ENCODE measurements at regions of chr1 and their contacts with region 1.

Region 1: DNA sequence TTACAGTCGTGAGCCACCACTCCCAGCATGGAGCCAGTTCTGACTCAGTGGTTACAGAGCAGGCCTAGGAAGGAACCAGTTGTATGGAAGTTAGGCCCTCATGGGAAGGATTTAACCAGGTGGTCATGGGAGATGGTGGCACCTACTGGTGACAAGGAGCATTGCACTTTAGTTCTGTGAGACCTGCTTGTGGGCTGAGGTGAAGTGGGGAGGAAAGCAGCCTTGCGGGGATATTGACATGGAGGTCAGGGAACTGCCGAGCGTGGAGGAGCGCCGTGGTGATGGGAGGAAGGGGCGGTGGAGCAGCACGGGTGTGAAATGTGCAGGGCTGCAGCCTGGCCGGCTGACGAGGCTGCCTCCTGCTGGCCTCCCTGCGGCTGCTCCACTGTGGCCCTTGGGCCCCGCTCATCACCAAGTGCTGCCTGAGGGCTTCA is 100.4 kb downstream of the GALNT2 start:
- DNase-seq: peak in 8 of 9 experiments; percentile 21 to 73 (median 39)
- ATAC-seq: peak; percentile 82
- H3K4me3 ChIP-seq: no peak overlapping the region
- H3K4me3 Mint-ChIP-seq: no peak overlapping the region
- H3K27ac ChIP-seq: no peak overlapping the region
- H3K27ac Mint-ChIP-seq: no peak overlapping the region
- H3K4me1 ChIP-seq: no peaks in the 10 kb centered on the region
- H3K4me1 Mint-ChIP-seq: peaks cover 29% of the 10 kb centered on the region
- H3K27me3 ChIP-seq: no peaks in the 10 kb centered on the region
- H3K27me3 Mint-ChIP-seq: no peaks in the 10 kb centered on the region
- CTCF ChIP-seq: peak; percentile 84

Region 2: GRCh38 chr1:229714964-229715603 is 452.4 kb before region 1 on chr1:
- CTCF ChIA-PET with region 1: interaction called, 5 read pairs
- POLR2A ChIA-PET with region 1: no interaction called
- intact Hi-C with region 1: loop called (anchors 1 to 2 kb)
- DNase-seq: peak in 5 of 9 experiments; percentile 21 to 55 (median 47)
- ATAC-seq: no peak
- H3K4me3 ChIP-seq: no peak overlapping the region
- H3K4me3 Mint-ChIP-seq: no peak overlapping the region
- H3K27ac ChIP-seq: no peak overlapping the region
- H3K27ac Mint-ChIP-seq: no peak overlapping the region
- H3K4me1 ChIP-seq: no peaks in the 10 kb centered on the region
- H3K4me1 Mint-ChIP-seq: no peaks in the 10 kb centered on the region
- H3K27me3 ChIP-seq: no peaks in the 10 kb centered on the region
- H3K27me3 Mint-ChIP-seq: no peaks in the 10 kb centered on the region
- CTCF ChIP-seq: peak; percentile 25

Region 3: GRCh38 chr1:229979993-229980392 is 187.4 kb before region 1 on chr1:
- CTCF ChIA-PET with region 1: no interaction called
- POLR2A ChIA-PET with region 1: no interaction called
- intact Hi-C with region 1: loop called in 1 of 2 experiments (anchors 10 kb)
- DNase-seq: no peak
- ATAC-seq: no peak
- H3K4me3 ChIP-seq: no peak overlapping the region
- H3K4me3 Mint-ChIP-seq: no peak overlapping the region
- H3K27ac ChIP-seq: no peak overlapping the region
- H3K27ac Mint-ChIP-seq: no peak overlapping the region
- H3K4me1 ChIP-seq: no peaks in the 10 kb centered on the region
- H3K4me1 Mint-ChIP-seq: no peaks in the 10 kb centered on the region
- H3K27me3 ChIP-seq: no peaks in the 10 kb centered on the region
- H3K27me3 Mint-ChIP-seq: peaks cover 11% of the 10 kb centered on the region
- CTCF ChIP-seq: no peak

Region 4: GRCh38 chr1:230292689-230293389 is 125.4 kb after region 1 on chr1:
- CTCF ChIA-PET with region 1: no interaction called
- POLR2A ChIA-PET with region 1: no interaction called
- intact Hi-C with region 1: no loop called
- DNase-seq: no peak
- ATAC-seq: no peak
- H3K4me3 ChIP-seq: no peak overlapping the region
- H3K4me3 Mint-ChIP-seq: no peak overlapping the region
- H3K27ac ChIP-seq: no peak overlapping the region
- H3K27ac Mint-ChIP-seq: no peak overlapping the region
- H3K4me1 ChIP-seq: peaks cover 4% of the 10 kb centered on the region
- H3K4me1 Mint-ChIP-seq: peaks cover 8% of the 10 kb centered on the region
- H3K27me3 ChIP-seq: peaks cover 0 to 2% of the 10 kb centered on the region in 2 experiments
- H3K27me3 Mint-ChIP-seq: peaks cover 16% of the 10 kb centered on the region
- CTCF ChIP-seq: no peak

Measured in CD8-positive, alpha-beta T cell (primary cell).